Mammary epithelial cell (primary cell): ENCODE measurements at regions of chr19 and their contacts with region 1.

Region 1: DNA sequence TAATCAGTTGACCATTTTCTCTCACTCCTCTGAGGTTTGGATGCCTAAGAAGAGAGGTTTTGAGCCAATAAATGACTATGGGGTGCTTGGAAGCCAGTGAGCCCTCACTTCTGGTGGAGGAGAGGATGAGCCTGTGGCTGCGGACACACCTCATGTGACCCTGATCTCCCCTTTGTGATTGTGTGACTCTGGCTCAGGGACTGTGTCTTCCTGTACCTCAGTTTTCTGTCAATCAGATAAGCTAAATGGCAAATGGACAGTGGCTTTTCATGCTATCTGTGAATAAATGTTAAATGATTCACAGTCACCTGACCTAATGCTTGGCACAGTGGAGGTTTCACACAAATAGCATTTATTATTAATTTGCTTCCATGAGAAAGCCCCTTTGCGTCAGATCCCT is 2.7 kb downstream of the PSG8 start:
- DNase-seq: peak; percentile 32
- H3K4me3 ChIP-seq: no peak overlapping the region
- H3K27ac ChIP-seq: peak overlapping the region; percentile 22
- H3K4me1 ChIP-seq: peaks cover 18% of the 10 kb centered on the region
- H3K27me3 ChIP-seq: no peaks in the 10 kb centered on the region
- CTCF ChIP-seq: no peak

Region 2: DNA sequence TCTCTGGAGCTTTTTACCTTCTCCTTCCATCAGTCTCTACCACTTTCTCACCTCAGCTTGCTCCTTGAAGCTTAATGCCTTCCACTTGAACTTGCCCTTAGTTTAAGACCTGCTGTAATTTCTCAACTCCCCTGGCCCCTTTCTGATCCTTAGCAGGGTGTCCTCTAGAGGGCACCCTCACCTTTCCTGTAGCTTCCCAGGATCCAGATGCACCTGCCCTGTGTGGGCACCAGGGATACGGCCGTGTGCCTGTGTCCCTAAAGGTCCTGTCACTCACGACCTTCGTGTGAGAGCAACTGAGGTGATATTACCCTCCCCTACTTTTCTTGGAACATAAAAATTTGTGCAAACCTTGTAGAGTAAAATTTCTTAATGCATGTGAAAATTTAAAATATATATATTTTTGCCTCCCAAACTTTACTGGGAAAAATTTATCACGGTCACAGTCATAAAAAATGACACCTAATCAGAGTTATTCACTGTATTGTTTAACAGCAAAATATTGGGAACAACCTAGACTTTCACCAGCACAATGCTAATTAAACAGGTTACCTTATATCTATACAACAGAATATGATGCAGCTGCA is 68.9 kb before region 1 on chr19:
- CTCF ChIA-PET with region 1: interaction called, 4 read pairs
- dilution Hi-C with region 1: no loop called
- in situ Hi-C with region 1: no loop called
- intact Hi-C with region 1: loop called (anchors 1 kb)
- DNase-seq: peak; percentile 43
- H3K4me3 ChIP-seq: no peak overlapping the region
- H3K27ac ChIP-seq: no peak overlapping the region
- H3K4me1 ChIP-seq: no peaks in the 10 kb centered on the region
- H3K27me3 ChIP-seq: peaks cover 4% of the 10 kb centered on the region
- CTCF ChIP-seq: peak; percentile 84 to 97

Region 3: DNA sequence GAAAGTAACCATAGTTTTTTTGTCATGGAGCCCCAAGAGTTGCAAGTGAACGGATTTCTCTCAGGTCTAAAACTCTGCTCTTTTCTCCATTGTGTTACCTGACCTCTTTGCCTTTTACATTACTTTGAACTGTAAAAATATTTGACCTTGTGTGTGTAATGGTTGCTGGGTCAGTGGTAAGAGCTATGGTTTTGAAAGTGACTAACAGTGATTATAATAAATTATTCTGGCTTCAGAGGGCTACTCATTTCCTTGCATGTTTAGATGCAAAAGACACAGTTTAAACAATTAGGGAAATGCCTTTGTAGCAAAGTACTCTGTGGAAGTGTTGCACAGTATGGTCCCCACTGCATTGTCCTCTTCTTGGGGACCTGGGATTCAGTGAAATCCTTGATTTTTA is 32.0 kb after region 1 on chr19:
- CTCF ChIA-PET with region 1: no interaction called
- dilution Hi-C with region 1: no loop called
- in situ Hi-C with region 1: no loop called
- intact Hi-C with region 1: no loop called
- DNase-seq: no peak
- H3K4me3 ChIP-seq: no peak overlapping the region
- H3K27ac ChIP-seq: no peak overlapping the region
- H3K4me1 ChIP-seq: peaks cover 2% of the 10 kb centered on the region
- H3K27me3 ChIP-seq: no peaks in the 10 kb centered on the region
- CTCF ChIP-seq: no peak